Activated CD8-positive, alpha-beta T cell treated with anti-CD3 and anti-CD28 coated beads for 36 hours (primary cell): ENCODE measurements at regions of chr10 and their contacts with region 1.

Region 1: GRCh38 chr10:29409241-29410057 is 120.6 kb downstream of the LYZL1 start:
- DNase-seq: peak; percentile 48
- ATAC-seq: peak; percentile 69
- H3K4me3 Mint-ChIP-seq: peak overlapping the region; percentile 97
- H3K27ac Mint-ChIP-seq: peak overlapping the region; percentile 92
- H3K4me1 Mint-ChIP-seq: peaks cover 33% of the 10 kb centered on the region
- H3K27me3 Mint-ChIP-seq: peaks cover 1% of the 10 kb centered on the region
- CTCF ChIP-seq: no peak

Region 2: DNA sequence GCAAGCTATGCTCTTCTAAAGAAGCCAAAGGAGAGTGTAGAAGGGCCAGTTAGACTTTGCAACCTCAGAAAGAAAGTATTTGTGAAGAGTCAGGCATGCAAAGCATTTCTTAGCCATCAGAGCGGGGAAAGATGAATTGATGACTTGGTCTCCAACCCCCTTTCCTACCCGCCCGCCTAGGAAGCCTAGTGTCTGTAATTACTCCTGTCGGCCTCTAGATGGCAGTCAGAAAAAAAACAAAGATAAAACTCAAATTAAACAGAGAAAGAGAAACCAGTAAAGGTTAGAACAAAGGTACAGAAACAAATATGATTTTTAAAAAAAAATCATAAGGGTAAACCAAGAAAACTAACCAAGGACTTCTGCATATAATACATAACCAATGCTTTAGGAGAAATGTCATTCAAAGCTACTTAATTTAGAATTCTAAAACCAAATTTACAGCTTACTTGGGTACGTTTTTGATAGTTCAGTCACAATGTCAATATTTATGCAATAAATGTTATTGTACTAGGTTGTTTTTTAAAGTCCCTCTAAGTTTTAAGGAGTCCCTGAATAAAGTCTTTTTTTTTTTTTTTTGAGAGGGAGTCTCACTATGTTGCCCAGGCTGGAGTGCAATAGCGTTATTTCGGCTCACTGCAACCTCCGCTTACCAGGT is 23.0 kb before region 1 on chr10:
- CTCF ChIA-PET with region 1: interaction called, 28 read pairs
- POLR2A ChIA-PET with region 1: no interaction called
- intact Hi-C with region 1: no loop called
- DNase-seq: peak; percentile 27
- ATAC-seq: peak; percentile 82
- H3K4me3 Mint-ChIP-seq: no peak overlapping the region
- H3K27ac Mint-ChIP-seq: no peak overlapping the region
- H3K4me1 Mint-ChIP-seq: peaks cover 3% of the 10 kb centered on the region
- H3K27me3 Mint-ChIP-seq: peaks cover 2% of the 10 kb centered on the region
- CTCF ChIP-seq: peak; percentile 61

Region 3: GRCh38 chr10:29435809-29436501 is 26.5 kb after region 1 on chr10:
- CTCF ChIA-PET with region 1: no interaction called
- POLR2A ChIA-PET with region 1: no interaction called
- intact Hi-C with region 1: no loop called
- DNase-seq: no peak
- ATAC-seq: no peak
- H3K4me3 Mint-ChIP-seq: no peak overlapping the region
- H3K27ac Mint-ChIP-seq: no peak overlapping the region
- H3K4me1 Mint-ChIP-seq: peaks cover 4% of the 10 kb centered on the region
- H3K27me3 Mint-ChIP-seq: no peaks in the 10 kb centered on the region
- CTCF ChIP-seq: no peak

Region 4: GRCh38 chr10:29455095-29455494 is 45.6 kb after region 1 on chr10:
- CTCF ChIA-PET with region 1: no interaction called
- POLR2A ChIA-PET with region 1: no interaction called
- intact Hi-C with region 1: no loop called
- DNase-seq: no peak
- ATAC-seq: no peak
- H3K4me3 Mint-ChIP-seq: no peak overlapping the region
- H3K27ac Mint-ChIP-seq: no peak overlapping the region
- H3K4me1 Mint-ChIP-seq: peaks cover 3% of the 10 kb centered on the region
- H3K27me3 Mint-ChIP-seq: no peaks in the 10 kb centered on the region
- CTCF ChIP-seq: no peak